Activated CD8-positive, alpha-beta memory T cell treated with anti-CD3 and anti-CD28 coated beads, Interleukin-2, amount 10 ng/mL, durations not matched to agents 7 days and 5 days (primary cell): ENCODE measurements at regions of chr9 and their contacts with region 1.

Region 1: DNA sequence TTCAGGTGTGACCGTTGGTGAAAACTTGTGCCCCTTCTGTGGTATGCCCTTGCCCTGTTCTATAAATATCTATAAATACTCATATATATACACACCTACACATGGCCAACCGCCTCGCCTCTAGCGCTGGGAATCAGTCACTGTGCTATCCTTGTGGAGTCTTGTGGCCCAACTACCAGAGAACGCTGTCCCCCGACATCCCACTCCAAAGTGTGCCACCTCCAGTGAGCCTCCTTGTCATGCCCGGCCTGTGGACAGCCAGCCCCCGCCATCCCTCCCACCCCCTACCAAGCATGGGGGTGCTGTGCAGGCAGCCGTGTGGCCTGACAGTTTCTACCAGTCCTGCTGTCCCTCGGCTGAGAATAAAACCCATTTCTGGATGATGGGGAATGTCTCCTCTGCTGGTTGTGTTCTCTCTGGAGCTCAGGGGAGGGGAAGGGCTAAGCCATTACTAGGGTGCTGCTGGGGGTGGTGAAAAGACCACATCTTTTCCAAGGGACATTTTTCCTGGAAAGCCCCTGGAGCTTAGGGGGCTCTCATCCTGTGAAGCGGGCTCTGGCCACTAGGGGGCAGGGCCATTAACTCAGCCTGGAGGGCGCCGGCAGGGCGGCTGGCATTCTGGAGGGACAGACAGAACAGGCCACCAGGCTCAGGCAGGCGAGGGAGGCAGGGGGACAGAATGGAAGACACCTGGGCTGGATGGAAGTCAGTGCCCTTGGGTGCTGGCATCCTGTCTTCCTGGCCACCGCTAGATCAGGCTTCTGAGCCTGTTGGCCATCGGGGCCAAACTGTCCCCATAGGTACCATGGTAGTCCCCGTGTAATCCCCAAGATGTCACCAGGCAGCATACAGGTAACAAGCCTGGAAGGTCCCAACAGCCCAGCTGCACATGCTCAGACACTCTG is 20.7 kb downstream of the GOLGA2 start:
- DNase-seq: peak; percentile 62
- ATAC-seq: no peak
- H3K4me3 Mint-ChIP-seq: no peak overlapping the region
- H3K27ac Mint-ChIP-seq: no peak overlapping the region
- H3K4me1 Mint-ChIP-seq: peaks cover 4% of the 10 kb centered on the region
- H3K27me3 Mint-ChIP-seq: peaks cover 14% of the 10 kb centered on the region

Region 2: DNA sequence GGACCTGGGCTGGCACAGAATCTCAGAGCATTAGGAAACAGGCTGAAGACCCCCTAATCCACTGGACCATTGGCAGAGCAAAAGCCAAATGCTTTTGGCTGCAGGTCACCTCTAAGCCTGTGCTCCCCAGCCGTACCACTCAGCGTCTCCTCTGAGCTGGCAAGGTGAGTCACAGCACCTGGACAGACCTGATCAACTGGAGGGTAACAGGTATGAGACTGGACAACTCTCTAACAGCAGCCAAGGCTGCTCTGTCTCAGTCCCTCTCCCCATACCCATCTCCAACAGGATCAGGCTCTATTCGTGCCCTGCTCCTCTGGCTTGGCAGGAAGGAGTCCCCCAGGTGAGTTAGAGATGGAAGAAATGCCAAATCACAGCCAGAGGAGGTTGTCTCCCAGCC is 16.0 kb after region 1 on chr9:
- CTCF ChIA-PET with region 1: interaction called, 12 read pairs
- DNase-seq: no peak
- ATAC-seq: no peak
- H3K4me3 Mint-ChIP-seq: no peak overlapping the region
- H3K27ac Mint-ChIP-seq: no peak overlapping the region
- H3K4me1 Mint-ChIP-seq: peaks cover 30% of the 10 kb centered on the region
- H3K27me3 Mint-ChIP-seq: no peaks in the 10 kb centered on the region